Pancreas (tissue), 10 donors: ENCODE measurements at regions of chr14 and their contacts with region 1.

Region 1: DNA sequence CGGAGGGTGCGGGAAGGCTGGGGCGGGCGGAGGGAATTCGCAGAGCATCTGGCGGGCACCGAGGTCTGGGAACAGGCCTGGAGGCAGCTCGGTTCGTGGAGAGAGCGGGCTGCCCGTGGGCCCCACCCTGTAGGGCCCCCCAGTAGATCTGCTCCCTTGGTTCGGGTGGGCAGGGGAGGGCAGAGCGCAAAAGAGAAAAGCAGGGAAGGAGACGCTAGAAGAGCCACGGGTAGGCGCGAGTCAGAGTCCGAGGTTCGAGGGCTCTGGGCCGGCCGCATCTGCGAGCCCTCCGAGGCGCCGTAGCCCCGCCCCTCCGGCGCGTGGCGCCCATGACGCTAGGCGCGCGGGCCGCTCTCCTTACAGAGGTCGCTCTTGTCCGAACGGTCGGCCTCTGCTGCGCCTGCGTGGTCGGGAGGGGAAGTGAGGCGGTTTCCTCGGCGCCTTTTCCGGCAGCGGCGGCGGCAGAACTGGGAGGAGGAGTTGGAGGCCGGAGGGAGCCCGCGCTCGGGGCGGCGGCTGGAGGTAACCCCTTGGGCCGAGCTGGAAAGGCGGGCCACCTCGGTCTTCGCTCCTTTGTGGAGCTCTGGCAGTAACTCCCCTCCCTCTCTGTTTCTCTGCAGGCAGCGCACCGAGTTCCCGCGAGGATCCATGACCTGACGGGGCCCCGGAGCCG is at the start of gene ARF6:
- DNase-seq: peak; percentile 98 to 100 (median 98)
- ATAC-seq: peak; percentile 96 to 98 (median 98)
- H3K4me3 ChIP-seq: peak within 1 kb of the TSS; percentile 92 to 100 (median 98)
- H3K27ac ChIP-seq: peak within 1 kb of the TSS; percentile 95 to 100 (median 99)
- H3K4me1 ChIP-seq: peaks cover 17 to 36% (median 31%) of the 10 kb centered on the region in 3 donors
- H3K27me3 ChIP-seq: no peaks in the 10 kb centered on the region
- CTCF ChIP-seq: no peak
- total RNA-seq, gene ARF6: 12.4 to 32.4 (median 16.6) TPM

Region 2: GRCh38 chr14:49786315-49787110 is 106.3 kb before region 1 on chr14:
- intact Hi-C with region 1: no loop called
- DNase-seq: no peak
- ATAC-seq: no peak
- H3K4me3 ChIP-seq: no peak overlapping the region
- H3K27ac ChIP-seq: no peak overlapping the region
- H3K4me1 ChIP-seq: no peaks in the 10 kb centered on the region
- H3K27me3 ChIP-seq: no peaks in the 10 kb centered on the region
- CTCF ChIP-seq: no peak

Region 3: GRCh38 chr14:50003213-50004031 is 110.7 kb after region 1 on chr14:
- intact Hi-C with region 1: loop called in 1 of 3 experiments (anchors 10 kb)
- DNase-seq: peak; percentile 63 to 84 (median 72)
- ATAC-seq: peak; percentile 57 to 74 (median 66)
- H3K4me3 ChIP-seq: peak overlapping the region; percentile 35 to 58 (median 46)
- H3K27ac ChIP-seq: peak overlapping the region; percentile 40 to 88 (median 78)
- H3K4me1 ChIP-seq: peaks cover 7 to 46% (median 15%) of the 10 kb centered on the region in 3 donors
- H3K27me3 ChIP-seq: no peaks in the 10 kb centered on the region
- CTCF ChIP-seq: peak in 1 of 4 donors; percentile 6